Mammary epithelial cell (primary cell): ENCODE measurements at regions of chr20 and their contacts with region 1.

Region 1: DNA sequence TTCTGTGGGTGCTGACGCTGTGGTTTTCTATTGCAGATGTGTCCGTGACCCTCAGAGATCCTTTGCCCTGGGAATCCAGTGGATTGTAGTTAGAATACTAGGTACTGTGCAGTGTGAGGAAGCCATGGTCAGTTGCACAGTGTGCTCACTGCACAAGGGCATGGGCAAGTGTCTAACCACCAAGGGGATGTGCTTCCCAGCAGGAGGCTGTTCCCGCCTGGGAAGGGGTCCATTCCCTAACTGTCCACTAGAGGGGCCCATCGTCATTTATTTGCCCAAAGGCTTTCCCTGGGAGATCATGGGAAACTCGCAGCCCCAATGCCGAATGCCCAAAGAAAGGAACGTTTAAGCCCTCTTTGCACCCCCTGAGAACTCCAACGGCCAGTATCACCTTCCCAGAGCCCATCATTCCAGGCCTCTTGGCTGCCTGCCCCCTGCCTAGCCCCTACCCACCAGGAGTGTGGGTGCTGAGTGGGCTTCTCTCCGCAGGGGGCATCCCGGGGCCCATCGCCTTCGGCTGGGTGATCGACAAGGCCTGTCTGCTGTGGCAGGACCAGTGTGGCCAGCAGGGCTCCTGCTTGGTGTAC is 26.2 kb downstream of the SLCO4A1 start:
- DNase-seq: peak; percentile 58
- H3K4me3 ChIP-seq: no peak overlapping the region
- H3K27ac ChIP-seq: no peak overlapping the region
- H3K4me1 ChIP-seq: peaks cover 24% of the 10 kb centered on the region
- H3K27me3 ChIP-seq: no peaks in the 10 kb centered on the region
- CTCF ChIP-seq: peak; percentile 82 to 89

Region 2: DNA sequence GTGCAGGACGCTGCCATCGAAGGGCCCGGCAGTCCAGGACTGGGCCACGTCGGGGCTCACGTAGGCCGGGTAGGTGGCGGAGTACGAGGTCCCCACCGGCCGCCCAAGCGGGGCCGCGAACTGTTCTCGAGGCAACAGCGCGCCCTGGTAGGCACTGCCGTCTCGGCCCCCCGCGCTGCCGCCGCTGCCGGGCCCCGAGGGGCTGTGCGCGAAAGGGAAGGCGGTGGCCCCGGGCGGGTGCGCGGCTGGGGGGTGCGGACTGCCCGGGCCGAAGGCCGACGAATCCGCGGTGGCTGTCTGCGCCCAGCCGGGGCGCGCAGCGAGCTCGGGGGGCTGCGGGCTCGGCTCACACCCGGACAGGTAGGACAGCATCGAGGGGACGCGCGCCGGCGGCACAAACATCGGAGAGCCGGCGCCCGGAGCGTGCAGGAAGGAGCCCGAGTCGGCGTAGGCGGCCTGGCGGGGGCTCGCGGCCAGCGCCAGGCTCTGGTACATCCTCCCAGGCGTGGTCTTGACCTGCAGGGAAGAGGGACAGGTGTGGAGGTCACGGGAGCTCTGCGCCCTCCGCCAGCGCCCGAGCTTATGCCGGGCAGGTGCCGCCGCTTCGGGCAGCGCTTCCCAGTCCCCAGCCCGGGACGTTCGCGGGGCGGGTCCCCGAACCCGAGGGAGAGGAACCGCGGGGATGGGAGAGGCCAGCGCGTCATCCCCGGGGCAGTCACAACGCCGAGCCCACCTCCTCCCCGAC is 193.3 kb before region 1 on chr20:
- CTCF ChIA-PET with region 1: no interaction called
- dilution Hi-C with region 1: no loop called
- in situ Hi-C with region 1: no loop called
- intact Hi-C with region 1: no loop called
- DNase-seq: no peak
- H3K4me3 ChIP-seq: no peak overlapping the region
- H3K27ac ChIP-seq: no peak overlapping the region
- H3K4me1 ChIP-seq: no peaks in the 10 kb centered on the region
- H3K27me3 ChIP-seq: peaks cover 50% of the 10 kb centered on the region
- CTCF ChIP-seq: no peak

Region 3: GRCh38 chr20:62704301-62704948 is 35.9 kb after region 1 on chr20:
- CTCF ChIA-PET with region 1: interaction called, 5 read pairs
- dilution Hi-C with region 1: no loop called
- in situ Hi-C with region 1: no loop called
- intact Hi-C with region 1: loop called (anchors 1 kb)
- DNase-seq: peak; percentile 97
- H3K4me3 ChIP-seq: no peak overlapping the region
- H3K27ac ChIP-seq: no peak overlapping the region
- H3K4me1 ChIP-seq: peaks cover 47% of the 10 kb centered on the region
- H3K27me3 ChIP-seq: peaks cover 2% of the 10 kb centered on the region
- CTCF ChIP-seq: peak in 1 of 2 donors; percentile 5

Region 4: DNA sequence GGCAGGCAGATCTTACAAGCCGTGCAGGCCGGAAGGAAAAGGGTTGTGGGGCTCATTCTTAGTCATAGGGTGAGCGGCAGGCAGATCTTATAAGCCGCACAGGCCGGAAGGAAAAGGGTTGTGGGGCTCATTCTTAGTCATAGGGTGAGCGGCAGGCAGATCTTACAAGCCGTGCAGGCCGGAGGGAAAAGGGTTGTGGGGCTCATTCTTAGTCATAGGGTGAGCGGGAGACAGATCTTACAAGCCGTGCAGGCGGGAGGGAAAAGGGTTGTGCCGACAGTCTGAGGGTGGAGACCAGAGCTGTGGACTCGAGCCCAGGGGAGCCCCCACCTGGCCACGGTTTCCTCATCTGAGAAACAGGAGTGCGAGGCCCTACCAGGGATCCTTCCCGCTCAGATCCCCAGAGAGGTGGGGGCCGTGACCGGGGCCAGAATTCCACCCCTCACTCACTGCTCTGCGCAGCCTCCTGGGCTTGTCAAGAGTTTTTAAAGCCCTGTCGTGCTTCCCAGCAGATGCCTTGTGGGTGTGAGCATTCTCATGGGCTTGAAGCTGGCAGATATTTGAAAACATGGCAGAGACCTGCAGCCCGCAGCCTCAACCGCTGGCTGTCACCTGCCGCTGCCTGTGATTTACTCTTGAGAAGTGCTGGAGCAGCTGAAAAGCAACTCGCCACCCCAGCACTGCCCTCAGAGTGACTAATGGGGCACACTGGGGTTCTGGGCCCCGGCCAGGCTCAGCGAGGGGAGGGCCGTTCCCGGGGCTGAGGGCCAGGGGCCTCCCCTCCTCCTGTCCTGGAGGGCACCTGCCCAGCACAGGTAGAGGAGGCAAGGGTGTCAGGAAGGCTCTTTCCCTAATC is 72.0 kb after region 1 on chr20:
- CTCF ChIA-PET with region 1: no interaction called
- dilution Hi-C with region 1: loop called (anchors 5 kb)
- in situ Hi-C with region 1: no loop called
- intact Hi-C with region 1: no loop called
- DNase-seq: peak; percentile 91
- H3K4me3 ChIP-seq: no peak overlapping the region
- H3K27ac ChIP-seq: no peak overlapping the region
- H3K4me1 ChIP-seq: peaks cover 45% of the 10 kb centered on the region
- H3K27me3 ChIP-seq: no peaks in the 10 kb centered on the region
- CTCF ChIP-seq: no peak

Region 5: DNA sequence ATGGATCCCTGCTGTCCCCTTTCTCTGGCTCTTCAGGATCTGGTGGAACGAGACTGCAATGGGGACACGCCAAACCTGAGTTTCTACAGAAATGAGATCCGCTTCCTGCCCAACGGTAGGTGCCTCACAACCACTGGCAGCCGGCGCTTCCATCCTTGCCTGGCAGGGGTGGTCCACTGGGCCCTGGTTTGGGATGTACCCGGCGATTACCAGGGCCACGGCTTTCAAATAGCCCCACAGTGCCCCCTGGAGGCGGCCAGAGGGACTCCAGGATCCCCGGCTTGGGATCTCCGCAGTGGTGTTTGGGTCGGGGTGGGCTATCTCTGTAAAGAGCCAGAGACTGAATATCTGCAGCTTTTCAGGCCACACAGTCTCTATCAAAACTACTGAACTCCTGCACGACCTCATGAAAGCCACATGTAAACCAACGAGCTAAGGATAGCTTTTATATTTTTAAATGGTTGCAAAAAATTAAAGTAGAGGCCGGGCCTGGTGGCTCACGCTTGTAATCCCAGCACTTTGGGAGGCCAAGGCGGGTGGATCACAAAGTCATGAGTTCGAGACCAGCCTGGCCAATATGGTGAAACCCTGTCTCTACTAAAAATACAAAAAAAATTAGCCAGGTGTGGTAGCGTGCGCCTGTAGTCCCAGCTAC is 139.8 kb after region 1 on chr20:
- CTCF ChIA-PET with region 1: no interaction called
- dilution Hi-C with region 1: no loop called
- in situ Hi-C with region 1: no loop called
- intact Hi-C with region 1: loop called (anchors 1 kb)
- DNase-seq: no peak
- H3K4me3 ChIP-seq: no peak overlapping the region
- H3K27ac ChIP-seq: no peak overlapping the region
- H3K4me1 ChIP-seq: peaks cover 12% of the 10 kb centered on the region
- H3K27me3 ChIP-seq: no peaks in the 10 kb centered on the region
- CTCF ChIP-seq: peak; percentile 68 to 90

Region 6: GRCh38 chr20:62914970-62915457 is 246.5 kb after region 1 on chr20:
- CTCF ChIA-PET with region 1: no interaction called
- dilution Hi-C with region 1: no loop called
- in situ Hi-C with region 1: no loop called
- intact Hi-C with region 1: no loop called
- DNase-seq: peak; percentile 46
- H3K4me3 ChIP-seq: no peak overlapping the region
- H3K27ac ChIP-seq: peak overlapping the region; percentile 50
- H3K4me1 ChIP-seq: peaks cover 27% of the 10 kb centered on the region
- H3K27me3 ChIP-seq: no peaks in the 10 kb centered on the region
- CTCF ChIP-seq: no peak